Mammary epithelial cell (primary cell): ENCODE measurements at regions of chr5 and their contacts with region 1.

Region 1: DNA sequence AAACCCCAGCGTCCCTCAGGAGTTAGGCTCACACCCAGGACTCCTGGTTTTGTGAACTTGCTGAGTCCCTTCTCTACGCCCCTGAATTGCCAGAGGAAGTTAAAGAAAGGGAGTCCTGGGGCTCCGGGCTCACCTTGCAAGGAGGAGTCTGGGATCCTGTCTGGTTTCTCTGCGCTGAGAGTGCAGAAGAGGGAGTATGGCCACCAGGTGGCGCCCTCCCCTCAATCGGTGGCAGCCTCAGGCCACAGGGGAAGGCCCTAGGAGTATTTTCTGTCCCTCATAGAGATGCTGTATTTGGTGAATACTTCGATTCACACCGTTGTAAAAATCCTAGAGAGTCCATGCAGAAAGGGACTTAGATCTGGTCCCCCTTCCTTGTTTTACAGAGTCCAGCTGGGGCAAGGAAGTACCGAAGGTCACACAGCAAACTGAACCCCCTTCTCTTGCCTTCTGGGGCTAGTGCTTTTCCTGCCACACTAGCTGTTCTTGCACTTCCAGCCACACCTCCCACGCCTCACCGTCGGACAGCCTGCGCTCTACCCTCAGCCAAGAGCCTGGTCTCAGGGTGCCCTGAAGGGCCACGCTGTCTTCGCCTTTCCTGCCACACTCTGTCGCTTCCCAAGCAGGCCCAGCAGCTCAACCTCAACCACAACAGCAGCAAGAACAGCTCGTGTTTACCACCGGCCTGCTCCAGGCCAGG is 10.2 kb downstream of the HAND1 start:
- DNase-seq: peak; percentile 59
- H3K4me3 ChIP-seq: no peak overlapping the region
- H3K27ac ChIP-seq: no peak overlapping the region
- H3K4me1 ChIP-seq: no peaks in the 10 kb centered on the region
- H3K27me3 ChIP-seq: peaks cover 16% of the 10 kb centered on the region
- CTCF ChIP-seq: peak; percentile 89 to 94

Region 2: GRCh38 chr5:153711755-153712154 is 756.0 kb before region 1 on chr5:
- CTCF ChIA-PET with region 1: no interaction called
- dilution Hi-C with region 1: no loop called
- in situ Hi-C with region 1: no loop called
- intact Hi-C with region 1: no loop called
- DNase-seq: no peak
- H3K4me3 ChIP-seq: no peak overlapping the region
- H3K27ac ChIP-seq: no peak overlapping the region
- H3K4me1 ChIP-seq: no peaks in the 10 kb centered on the region
- H3K27me3 ChIP-seq: no peaks in the 10 kb centered on the region
- CTCF ChIP-seq: peak in 1 of 2 donors; percentile 30

Region 3: DNA sequence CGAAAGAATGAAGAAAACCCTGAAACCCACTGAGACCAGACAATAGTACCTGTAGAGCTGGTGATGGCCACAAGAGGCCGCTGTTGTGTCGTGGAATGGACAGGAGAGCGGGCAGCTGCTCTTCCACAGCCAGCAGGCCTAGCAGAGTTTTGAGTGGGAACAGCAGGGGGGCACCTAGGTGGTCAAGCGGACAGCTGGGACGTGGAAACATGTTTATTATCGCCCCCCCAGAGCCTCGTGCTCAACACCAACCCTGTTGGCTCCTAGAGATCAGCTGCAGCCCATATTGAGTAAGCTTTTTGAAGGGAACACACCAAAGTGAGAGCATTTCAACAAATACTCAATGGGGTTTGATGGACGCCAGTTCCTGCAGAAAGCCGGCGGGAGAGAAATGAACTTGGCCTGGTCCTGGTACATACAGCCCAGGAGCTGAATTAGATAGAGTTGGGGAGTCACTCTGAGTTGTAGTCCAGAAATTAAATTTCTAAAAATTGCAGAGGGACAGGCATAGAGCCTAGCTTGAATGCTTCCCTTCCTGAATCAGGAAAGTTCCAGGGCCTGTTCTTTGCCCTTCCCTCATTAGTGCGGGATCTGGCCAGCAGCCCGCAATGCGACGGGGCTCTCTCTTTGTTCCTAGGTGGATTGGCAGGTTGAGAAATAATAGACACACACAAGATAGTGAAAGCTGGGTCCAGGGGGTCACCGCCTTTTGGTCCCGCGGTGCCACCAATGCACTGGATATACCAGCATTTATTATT is 395.2 kb before region 1 on chr5:
- CTCF ChIA-PET with region 1: no interaction called
- dilution Hi-C with region 1: no loop called
- in situ Hi-C with region 1: no loop called
- intact Hi-C with region 1: loop called (anchors 1 kb)
- DNase-seq: peak; percentile 56
- H3K4me3 ChIP-seq: no peak overlapping the region
- H3K27ac ChIP-seq: no peak overlapping the region
- H3K4me1 ChIP-seq: peaks cover 3% of the 10 kb centered on the region
- H3K27me3 ChIP-seq: no peaks in the 10 kb centered on the region
- CTCF ChIP-seq: peak; percentile 82 to 90

Region 4: DNA sequence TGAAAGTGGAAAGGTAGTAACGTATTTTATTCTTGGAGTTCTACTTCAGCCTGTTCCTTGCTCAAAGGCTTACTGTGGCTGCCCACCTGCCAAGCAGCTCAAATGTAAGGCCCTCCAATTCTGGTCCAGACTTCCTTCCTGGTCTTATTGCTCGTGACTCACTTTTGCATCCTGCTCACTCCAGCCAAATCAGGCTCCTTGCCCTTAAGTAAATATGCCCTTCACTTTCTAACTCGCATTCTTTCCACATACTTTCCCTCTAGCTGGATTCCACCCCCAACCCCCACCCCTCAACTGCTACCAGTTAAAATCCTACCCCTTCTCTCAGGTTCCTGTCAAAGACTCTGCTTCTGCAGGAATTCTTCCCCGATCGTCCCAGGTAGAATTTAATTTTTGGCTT is 180.7 kb before region 1 on chr5:
- CTCF ChIA-PET with region 1: no interaction called
- dilution Hi-C with region 1: no loop called
- in situ Hi-C with region 1: no loop called
- intact Hi-C with region 1: no loop called
- DNase-seq: no peak
- H3K4me3 ChIP-seq: no peak overlapping the region
- H3K27ac ChIP-seq: no peak overlapping the region
- H3K4me1 ChIP-seq: peaks cover 25% of the 10 kb centered on the region
- H3K27me3 ChIP-seq: no peaks in the 10 kb centered on the region
- CTCF ChIP-seq: no peak

Region 5: GRCh38 chr5:154520861-154521453 is 53.2 kb after region 1 on chr5:
- CTCF ChIA-PET with region 1: no interaction called
- dilution Hi-C with region 1: no loop called
- in situ Hi-C with region 1: no loop called
- intact Hi-C with region 1: loop called (anchors 2 kb)
- DNase-seq: no peak
- H3K4me3 ChIP-seq: peak overlapping the region in 1 of 3 experiments; percentile 23
- H3K27ac ChIP-seq: no peak overlapping the region
- H3K4me1 ChIP-seq: peaks cover 15% of the 10 kb centered on the region
- H3K27me3 ChIP-seq: no peaks in the 10 kb centered on the region
- CTCF ChIP-seq: peak; percentile 67 to 87

Region 6: GRCh38 chr5:154583545-154584496 is 116.0 kb after region 1 on chr5:
- CTCF ChIA-PET with region 1: no interaction called
- dilution Hi-C with region 1: no loop called
- in situ Hi-C with region 1: no loop called
- intact Hi-C with region 1: no loop called
- DNase-seq: peak; percentile 48
- H3K4me3 ChIP-seq: no peak overlapping the region
- H3K27ac ChIP-seq: no peak overlapping the region
- H3K4me1 ChIP-seq: no peaks in the 10 kb centered on the region
- H3K27me3 ChIP-seq: no peaks in the 10 kb centered on the region
- CTCF ChIP-seq: no peak

Region 7: DNA sequence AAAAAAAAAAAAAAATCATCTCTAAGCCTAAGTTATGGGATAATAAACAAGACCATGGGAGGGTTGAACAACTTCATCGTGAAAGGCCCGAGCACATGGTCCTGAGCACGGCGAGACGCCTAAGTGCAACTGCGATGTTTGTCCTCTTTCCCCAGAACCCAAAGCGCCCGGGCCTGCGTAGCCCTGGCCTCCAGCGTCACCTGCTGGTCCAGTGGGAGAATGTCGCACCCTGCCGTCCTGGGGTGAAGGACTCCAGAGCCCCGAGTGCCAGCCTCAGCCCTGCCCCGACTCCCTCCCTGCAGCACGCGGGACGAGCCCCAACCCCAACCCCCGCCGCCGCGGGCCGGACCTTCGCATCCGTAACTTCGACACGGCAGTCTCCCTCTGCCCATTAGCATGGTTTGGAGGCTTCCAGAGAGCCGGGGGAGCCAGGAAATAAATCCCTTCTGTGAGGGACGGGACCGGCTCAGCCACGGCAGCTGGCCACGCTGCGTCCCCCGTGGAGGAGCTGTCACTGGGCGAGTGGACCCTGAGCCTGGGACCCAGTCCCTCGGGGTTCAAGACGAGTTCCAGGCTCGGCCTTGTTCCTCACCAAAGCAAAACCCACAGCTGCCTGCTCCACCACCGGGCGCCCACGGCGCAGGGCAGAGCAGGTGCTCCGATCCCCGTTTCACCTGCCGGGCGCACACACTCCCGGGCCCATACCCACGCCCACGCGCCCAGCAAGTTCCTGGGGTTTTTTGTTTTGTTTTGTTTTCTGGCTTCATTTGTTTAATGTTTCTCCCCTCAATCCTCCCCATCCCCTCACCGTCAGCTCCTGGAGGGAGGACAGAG is 142.7 kb after region 1 on chr5:
- CTCF ChIA-PET with region 1: no interaction called
- dilution Hi-C with region 1: no loop called
- in situ Hi-C with region 1: loop called (anchors 5 to 10 kb)
- intact Hi-C with region 1: loop called (anchors 1 kb)
- DNase-seq: peak; percentile 56
- H3K4me3 ChIP-seq: peak overlapping the region in 2 of 3 experiments; percentile 43 to 46
- H3K27ac ChIP-seq: no peak overlapping the region
- H3K4me1 ChIP-seq: peaks cover 11% of the 10 kb centered on the region
- H3K27me3 ChIP-seq: no peaks in the 10 kb centered on the region
- CTCF ChIP-seq: peak; percentile 79 to 98